ENCODE measurements at regions of chr15 and their contacts with region 1.

Region 1: GRCh38 chr15:68584756-68585573 is 6.2 kb downstream of the CORO2B start:
- DNase-seq: peak in 1 of 3 donors; percentile 68
- ATAC-seq: no peak
- H3K4me3 ChIP-seq: no peak overlapping the region
- H3K27ac ChIP-seq: peak overlapping the region; percentile 16
- H3K4me1 ChIP-seq: peaks cover 5% of the 10 kb centered on the region
- H3K27me3 ChIP-seq: no peaks in the 10 kb centered on the region

Region 2: DNA sequence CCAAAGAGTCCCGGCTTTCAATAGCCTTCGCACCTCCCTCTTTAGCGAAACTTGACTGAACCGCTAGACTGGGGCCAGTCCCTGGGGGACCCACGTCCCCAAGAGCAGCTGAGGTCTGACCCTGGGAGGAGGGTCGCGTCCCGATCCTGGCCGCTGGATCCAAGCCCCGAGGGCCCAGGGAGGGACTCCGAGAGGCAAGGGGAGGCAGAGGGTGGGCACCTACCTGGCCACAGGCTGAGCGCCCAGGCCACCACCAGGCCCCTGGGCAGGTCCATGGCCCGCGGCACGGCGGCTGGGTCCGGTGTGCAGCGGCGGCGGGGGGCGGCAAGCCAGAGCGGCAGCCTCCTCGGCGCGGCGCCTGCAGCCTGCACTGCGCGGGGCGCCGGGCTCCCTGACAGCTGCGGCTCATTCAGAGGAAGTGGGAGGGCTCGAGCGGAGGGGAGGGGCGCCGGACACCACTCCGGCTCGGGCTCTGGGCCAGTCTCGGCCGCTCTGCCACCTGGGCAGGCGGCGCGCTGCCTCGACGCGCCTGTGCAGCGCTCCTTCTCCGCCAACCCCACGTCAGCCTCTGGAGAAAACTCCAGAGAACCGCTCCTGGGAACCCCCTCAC is 153.1 kb before region 1 on chr15 and contains the start of gene ITGA11:
- intact Hi-C with region 1: no loop called
- DNase-seq: peak; percentile 85 to 96 (median 93)
- ATAC-seq: peak; percentile 86 to 88
- H3K4me3 ChIP-seq: peak within 1 kb of the TSS; percentile 59
- H3K27ac ChIP-seq: no peak within 1 kb of the TSS
- H3K4me1 ChIP-seq: no peaks in the 10 kb centered on the region
- H3K27me3 ChIP-seq: no peaks in the 10 kb centered on the region
- total RNA-seq, gene ITGA11: 20.1 to 34.0 (median 21.2) TPM

Region 3: DNA sequence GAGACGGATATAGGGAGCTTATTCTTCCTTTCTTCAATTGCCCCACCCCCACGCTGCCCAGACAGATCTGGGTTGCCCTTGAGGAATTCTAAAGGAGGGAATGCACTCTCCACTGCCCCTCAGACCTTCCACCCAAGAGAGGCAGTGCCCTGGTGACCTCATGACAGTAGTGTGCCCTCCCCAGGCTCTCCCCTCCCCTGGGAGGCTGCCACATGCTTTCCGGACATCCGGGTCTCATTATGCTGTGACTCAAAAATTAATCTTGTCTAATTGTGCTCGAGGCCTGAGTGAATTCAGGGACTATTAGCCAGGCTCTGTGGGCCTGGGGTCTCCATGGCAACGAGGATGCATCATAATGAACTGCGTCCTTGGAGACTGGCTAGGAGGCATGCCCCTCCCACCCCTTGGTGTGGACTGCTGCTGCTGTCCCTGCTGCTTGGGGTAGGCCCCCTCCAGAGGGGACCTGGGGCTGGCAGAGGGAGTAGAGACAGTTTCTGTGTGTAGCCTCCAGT is 14.7 kb after region 1 on chr15:
- intact Hi-C with region 1: loop called in 1 of 4 experiments (anchors 2 kb)
- DNase-seq: peak; percentile 65 to 76 (median 69)
- ATAC-seq: peak in 1 of 2 donors; percentile 5
- H3K4me3 ChIP-seq: no peak overlapping the region
- H3K27ac ChIP-seq: peak overlapping the region; percentile 2
- H3K4me1 ChIP-seq: peaks cover 24% of the 10 kb centered on the region
- H3K27me3 ChIP-seq: no peaks in the 10 kb centered on the region

Region 4: DNA sequence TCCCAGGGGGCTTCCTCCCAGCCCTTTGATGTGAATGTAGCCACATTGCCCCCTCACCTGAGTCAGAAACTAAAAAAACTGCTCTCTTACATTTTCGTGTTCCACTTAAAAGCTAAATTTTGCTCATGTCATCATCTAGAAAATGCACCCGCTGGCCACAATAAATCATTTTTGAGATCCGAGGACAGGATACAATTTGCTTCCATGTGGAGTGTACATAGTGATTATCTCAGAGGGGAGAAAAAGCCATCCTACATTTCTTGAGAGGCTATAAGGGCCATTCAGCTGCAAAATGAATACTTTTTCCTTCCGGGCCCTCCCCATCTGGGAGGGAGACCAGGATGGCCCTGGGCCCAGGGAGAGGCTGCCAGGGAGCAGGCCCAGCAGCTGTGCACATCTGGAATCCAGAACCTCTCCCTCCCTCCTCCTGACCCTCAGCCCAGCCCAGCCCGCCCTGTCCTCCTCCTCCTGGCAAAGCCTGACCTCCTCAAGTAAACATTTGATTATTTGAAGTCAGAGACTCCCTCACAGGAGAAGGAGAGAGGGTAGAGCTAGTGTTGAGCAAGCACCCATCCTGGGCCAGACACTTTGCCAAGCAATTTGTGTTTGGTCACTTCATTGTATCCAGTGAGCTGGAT is 52.9 kb after region 1 on chr15:
- intact Hi-C with region 1: loop called in 2 of 4 experiments (anchors 2 to 5 kb)
- DNase-seq: peak; percentile 84 to 93 (median 92)
- ATAC-seq: peak; percentile 80 to 85
- H3K4me3 ChIP-seq: no peak overlapping the region
- H3K27ac ChIP-seq: no peak overlapping the region
- H3K4me1 ChIP-seq: peaks cover 23% of the 10 kb centered on the region
- H3K27me3 ChIP-seq: no peaks in the 10 kb centered on the region

Measured in right cardiac atrium (tissue), 5 donors.